Cardiac septum (tissue), 1 donor: ENCODE measurements at regions of chr17 and their contacts with region 1.

Region 1: GRCh38 chr17:15171167-15172047 is 93.7 kb downstream of the PMP22 start:
- DNase-seq: peak; percentile 76

Region 2: GRCh38 chr17:14886240-14886639 is 285.2 kb before region 1 on chr17:
- intact Hi-C with region 1: loop called (anchors 5 kb)
- DNase-seq: no peak